ENCODE measurements at regions of chr4 and their contacts with region 1.

Region 1: DNA sequence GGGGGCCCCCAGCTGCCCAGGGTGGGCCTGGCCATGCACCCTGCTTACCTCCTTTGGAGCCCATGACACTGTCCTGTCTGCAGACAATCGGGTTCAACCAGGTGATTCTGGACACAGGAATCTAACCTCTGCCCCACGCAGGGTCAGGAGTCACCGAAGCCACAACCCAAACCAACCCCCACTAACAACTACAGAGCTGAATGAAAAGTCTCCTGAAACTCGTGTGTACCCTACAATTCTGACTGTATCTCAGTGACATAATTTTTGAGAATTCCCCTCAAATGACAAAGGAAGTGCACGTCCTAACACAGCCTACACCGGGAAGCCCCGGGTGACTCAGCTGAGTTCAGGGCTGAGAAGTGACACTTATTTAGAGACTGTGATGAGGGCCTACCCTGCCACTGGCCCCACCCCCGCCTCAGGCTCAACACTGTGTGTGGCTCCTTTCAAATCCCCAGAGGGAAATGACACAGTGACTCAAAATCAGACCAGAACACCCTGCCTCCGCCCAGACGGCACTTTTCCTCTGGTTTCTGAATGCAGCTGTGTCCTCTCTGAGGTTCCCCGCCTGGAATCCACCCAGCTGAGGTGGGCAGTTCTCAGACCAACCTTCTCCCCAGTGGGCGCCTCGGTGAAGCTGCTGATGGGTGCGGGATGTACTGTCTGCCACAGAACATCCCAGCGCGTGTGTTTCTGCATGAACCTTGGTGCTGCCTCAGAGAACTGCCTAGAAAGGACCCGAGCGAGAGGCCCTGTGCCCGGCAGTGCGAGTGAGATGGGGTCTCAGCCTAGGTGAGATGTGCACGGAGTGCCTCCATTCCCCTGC is 9.9 kb downstream of the TNIP2 start:
- DNase-seq: peak; percentile 85
- ATAC-seq: peak; percentile 78
- H3K4me3 ChIP-seq: no peak overlapping the region
- H3K27ac ChIP-seq: peak overlapping the region; percentile 39; the same call in 1 of the 2 replicates
- H3K4me1 ChIP-seq: peaks cover 28% of the 10 kb centered on the region
- H3K27me3 ChIP-seq: no peaks in the 10 kb centered on the region
- CTCF ChIP-seq: no peak
- POLR2A ChIP-seq: no peak
- RAD21 ChIP-seq: peak; percentile 12; the same call in 1 of the 2 replicates

Region 2: GRCh38 chr4:2732991-2733868 is 13.0 kb before region 1 on chr4:
- CTCF ChIA-PET with region 1: interaction called, 10 read pairs
- POLR2A ChIA-PET with region 1: no interaction called
- dilution Hi-C with region 1: no loop called
- in situ Hi-C with region 1: no loop called
- intact Hi-C with region 1: no loop called
- DNase-seq: no peak
- ATAC-seq: no peak; the same call in 1 of the 2 replicates
- H3K4me3 ChIP-seq: no peak overlapping the region
- H3K27ac ChIP-seq: no peak overlapping the region
- H3K4me1 ChIP-seq: no peaks in the 10 kb centered on the region
- H3K27me3 ChIP-seq: no peaks in the 10 kb centered on the region
- CTCF ChIP-seq: no peak
- POLR2A ChIP-seq: no peak
- RAD21 ChIP-seq: no peak

Measured in IMR-90 (cell line).